Endothelial cell of umbilical vein (primary cell): ENCODE measurements at regions of chr11 and their contacts with region 1.

Region 1: DNA sequence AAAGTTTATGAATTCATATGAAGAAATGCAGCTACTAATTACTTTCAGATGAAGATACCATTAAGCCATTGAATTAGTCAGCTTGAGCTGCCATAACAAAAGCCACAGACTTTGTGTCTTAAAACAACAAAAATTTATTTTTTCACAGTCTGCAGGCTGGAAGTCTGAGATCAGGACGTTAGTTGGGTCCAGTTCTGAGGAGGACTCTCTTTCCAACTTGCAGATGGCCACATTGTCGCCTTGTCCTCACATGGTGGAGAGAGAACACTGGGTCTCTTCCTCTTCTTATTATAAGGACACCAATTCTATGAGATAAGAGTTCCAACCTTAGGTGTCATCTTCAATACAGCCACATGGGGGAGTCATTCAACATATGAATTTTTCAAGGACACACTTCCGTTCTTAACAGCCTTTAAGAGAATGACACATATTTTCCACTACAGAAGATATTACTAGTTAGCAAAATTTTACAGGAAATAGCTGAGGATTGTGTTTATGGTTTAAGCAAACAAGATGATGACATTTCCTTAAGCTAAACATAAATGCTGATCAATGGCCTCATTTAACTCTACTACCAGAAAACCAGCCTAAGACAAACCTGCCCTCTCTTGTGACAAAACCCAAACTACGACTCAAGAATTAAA is 56.0 kb downstream of the DCUN1D5 start:
- DNase-seq: peak; percentile 91
- H3K4me3 ChIP-seq: no peak overlapping the region
- H3K27ac ChIP-seq: peak overlapping the region; percentile 59
- H3K4me1 ChIP-seq: peaks cover 9% of the 10 kb centered on the region
- H3K27me3 ChIP-seq: no peaks in the 10 kb centered on the region
- CTCF ChIP-seq: peak; percentile 31 to 58
- POLR2A ChIP-seq: no peak

Region 2: DNA sequence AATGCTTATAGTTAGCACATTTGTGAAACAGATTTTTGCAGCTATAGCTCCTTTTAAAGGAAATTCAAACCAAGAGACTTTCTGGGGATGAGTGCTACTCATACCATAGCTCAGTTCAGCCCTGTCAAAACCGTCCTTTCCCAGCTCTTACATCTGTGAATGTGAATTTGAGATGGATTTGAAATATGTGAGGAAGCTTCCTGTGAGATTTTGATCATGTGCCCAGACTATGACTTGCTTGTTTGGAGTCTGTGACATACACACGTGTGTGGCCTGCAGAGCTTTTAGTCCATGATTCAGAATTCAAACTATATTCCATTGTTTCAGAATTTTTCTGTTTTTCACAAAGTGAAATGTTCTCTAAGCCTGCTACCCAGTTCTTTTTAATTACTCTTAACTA is 233.6 kb before region 1 on chr11:
- CTCF ChIA-PET with region 1: no interaction called
- POLR2A ChIA-PET with region 1: no interaction called
- dilution Hi-C with region 1: no loop called
- intact Hi-C with region 1: loop called (anchors 1 kb)
- DNase-seq: peak; percentile 30
- H3K4me3 ChIP-seq: no peak overlapping the region
- H3K27ac ChIP-seq: peak overlapping the region; percentile 39
- H3K4me1 ChIP-seq: peaks cover 29% of the 10 kb centered on the region
- H3K27me3 ChIP-seq: peaks cover 3 to 10% of the 10 kb centered on the region in 2 experiments
- CTCF ChIP-seq: no peak
- POLR2A ChIP-seq: no peak

Region 3: GRCh38 chr11:102831489-102832440 is 204.1 kb before region 1 on chr11:
- CTCF ChIA-PET with region 1: no interaction called
- POLR2A ChIA-PET with region 1: no interaction called
- dilution Hi-C with region 1: no loop called
- intact Hi-C with region 1: loop called (anchors 1 kb)
- DNase-seq: peak; percentile 63
- H3K4me3 ChIP-seq: peak overlapping the region in 2 of 3 experiments; percentile 15 to 40
- H3K27ac ChIP-seq: no peak overlapping the region
- H3K4me1 ChIP-seq: no peaks in the 10 kb centered on the region
- H3K27me3 ChIP-seq: peaks cover 5 to 13% of the 10 kb centered on the region in 2 experiments
- CTCF ChIP-seq: peak; percentile 62 to 71
- POLR2A ChIP-seq: no peak

Region 4: DNA sequence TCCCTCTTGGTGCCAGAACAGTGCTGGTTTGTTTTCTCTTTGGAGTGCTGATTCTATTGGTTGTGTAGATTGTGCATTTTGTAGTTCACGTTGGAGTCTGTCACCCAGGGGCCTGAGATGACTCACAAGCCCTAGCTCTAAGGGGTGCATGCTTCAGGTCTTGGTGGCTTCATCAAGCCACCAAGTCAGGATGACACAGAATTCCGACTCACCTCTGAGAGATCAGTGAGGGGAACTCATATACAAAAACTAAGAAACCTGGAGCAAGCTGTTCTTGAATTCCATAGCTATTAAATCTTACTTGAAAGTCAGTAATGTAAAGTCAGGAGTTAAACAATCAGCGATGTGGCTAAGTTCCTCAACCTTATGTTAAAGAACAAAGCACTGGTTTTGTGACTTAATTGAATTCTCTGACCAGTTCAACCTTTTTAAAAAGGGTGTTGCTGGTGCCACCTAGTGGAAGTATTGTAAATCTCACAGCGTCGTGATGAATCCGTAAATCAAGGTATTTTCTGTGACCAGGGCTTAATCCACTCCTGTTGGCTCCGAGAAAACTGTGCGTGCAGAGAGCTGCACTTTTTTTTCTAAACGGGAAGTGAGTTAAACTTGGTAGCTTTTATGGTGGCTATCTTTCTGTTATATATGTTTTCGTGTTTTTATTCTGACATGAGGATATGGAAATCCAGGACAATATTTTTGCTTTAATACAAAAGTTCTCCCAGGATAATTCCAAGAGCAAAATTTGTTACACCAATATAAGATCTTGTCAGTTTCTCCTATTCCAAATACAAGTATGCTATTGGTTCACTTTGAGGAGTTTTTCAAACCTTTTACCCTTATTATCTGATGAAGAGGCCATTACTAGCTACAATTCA is 95.0 kb before region 1 on chr11:
- CTCF ChIA-PET with region 1: interaction called, 9 read pairs
- POLR2A ChIA-PET with region 1: no interaction called
- dilution Hi-C with region 1: no loop called
- intact Hi-C with region 1: loop called (anchors 2 kb)
- DNase-seq: peak; percentile 79
- H3K4me3 ChIP-seq: no peak overlapping the region
- H3K27ac ChIP-seq: no peak overlapping the region
- H3K4me1 ChIP-seq: no peaks in the 10 kb centered on the region
- H3K27me3 ChIP-seq: no peaks in the 10 kb centered on the region
- CTCF ChIP-seq: peak; percentile 65 to 67
- POLR2A ChIP-seq: no peak

Region 5: DNA sequence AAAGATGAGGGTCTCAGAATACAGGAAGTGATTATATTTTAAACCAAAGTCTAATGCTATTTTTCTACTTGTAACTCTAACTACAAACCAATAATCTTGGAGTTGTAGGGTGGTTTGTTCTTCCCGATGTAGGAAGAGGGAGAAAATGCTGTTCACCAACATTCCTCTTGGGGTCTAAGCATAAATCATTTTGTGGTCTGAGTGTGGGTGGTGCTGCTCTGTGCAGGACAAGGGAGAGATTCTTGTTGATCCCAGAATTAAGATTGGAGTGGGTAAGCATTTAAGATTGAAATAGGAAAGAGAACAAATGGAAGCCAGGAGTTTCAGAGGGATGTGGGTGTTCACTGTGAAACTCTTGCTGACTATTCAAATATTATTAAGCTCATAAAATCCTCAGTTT is 41.8 kb before region 1 on chr11:
- CTCF ChIA-PET with region 1: interaction called, 6 read pairs
- POLR2A ChIA-PET with region 1: no interaction called
- dilution Hi-C with region 1: no loop called
- intact Hi-C with region 1: loop called (anchors 1 kb)
- DNase-seq: no peak
- H3K4me3 ChIP-seq: no peak overlapping the region
- H3K27ac ChIP-seq: no peak overlapping the region
- H3K4me1 ChIP-seq: peaks cover 37% of the 10 kb centered on the region
- H3K27me3 ChIP-seq: no peaks in the 10 kb centered on the region
- CTCF ChIP-seq: no peak
- POLR2A ChIP-seq: no peak

Region 6: DNA sequence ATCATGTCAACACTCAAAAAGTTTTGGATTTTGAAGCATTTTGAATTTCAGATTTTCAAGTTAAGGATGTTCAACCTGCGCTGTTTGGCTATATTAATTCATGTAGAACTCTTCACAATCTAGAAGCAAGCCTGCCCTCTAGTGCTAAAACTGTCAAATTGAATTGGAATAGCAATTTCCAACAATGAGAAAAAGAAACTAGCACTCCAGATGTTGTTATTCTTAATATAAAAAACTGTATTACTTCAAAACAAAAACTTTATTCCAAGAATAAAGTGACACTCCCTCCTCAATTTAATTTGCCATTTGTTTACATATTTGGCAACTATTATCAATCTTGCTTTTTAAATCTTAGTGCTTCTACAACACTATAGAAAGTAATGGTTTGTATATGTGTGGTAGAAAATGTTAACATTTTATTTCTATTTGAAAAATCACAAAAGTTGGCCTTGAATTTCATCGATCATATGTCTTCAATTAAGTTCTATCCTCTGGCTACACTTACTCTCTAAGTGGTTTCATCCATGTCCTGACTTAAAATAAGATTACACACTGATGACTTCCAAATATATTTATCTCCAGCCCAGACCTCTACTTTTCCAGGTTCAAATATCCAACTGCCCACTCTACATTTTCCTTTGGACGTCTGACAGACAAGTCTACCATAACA is 19.4 kb after region 1 on chr11:
- CTCF ChIA-PET with region 1: interaction called, 13 read pairs
- POLR2A ChIA-PET with region 1: no interaction called
- dilution Hi-C with region 1: no loop called
- intact Hi-C with region 1: loop called (anchors 1 kb)
- DNase-seq: peak; percentile 54
- H3K4me3 ChIP-seq: no peak overlapping the region
- H3K27ac ChIP-seq: no peak overlapping the region
- H3K4me1 ChIP-seq: no peaks in the 10 kb centered on the region
- H3K27me3 ChIP-seq: no peaks in the 10 kb centered on the region
- CTCF ChIP-seq: peak; percentile 43 to 45
- POLR2A ChIP-seq: no peak

Region 7: DNA sequence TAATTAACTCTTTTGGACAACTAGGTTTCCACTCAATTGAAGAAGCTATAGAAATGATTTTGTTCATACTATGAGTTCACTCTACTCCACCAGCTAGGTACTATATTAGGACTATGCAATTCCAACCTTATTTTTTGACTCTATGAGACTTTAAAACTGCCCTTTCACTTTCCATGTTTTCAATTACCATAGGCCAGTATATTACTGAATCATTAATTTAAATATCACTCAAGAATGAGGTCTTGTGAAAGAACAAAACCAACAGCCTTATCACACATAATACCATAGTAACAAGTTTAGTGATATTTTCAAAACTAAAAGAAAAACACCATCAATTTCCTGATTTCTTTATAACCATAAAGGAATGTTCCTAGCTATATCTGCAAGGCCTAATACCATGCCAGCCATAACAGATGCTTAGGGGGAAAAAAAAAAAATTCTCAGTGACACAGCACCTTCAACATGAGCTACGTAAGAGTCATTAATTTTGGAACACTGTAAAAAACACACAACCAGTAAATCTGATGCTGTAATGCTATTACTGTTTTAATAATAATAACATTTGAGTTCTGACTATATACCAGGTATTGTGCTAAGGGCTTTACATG is 49.9 kb after region 1 on chr11:
- CTCF ChIA-PET with region 1: no interaction called
- POLR2A ChIA-PET with region 1: no interaction called
- dilution Hi-C with region 1: no loop called
- intact Hi-C with region 1: no loop called
- DNase-seq: peak; percentile 71
- H3K4me3 ChIP-seq: no peak overlapping the region
- H3K27ac ChIP-seq: peak overlapping the region; percentile 20
- H3K4me1 ChIP-seq: peaks cover 23% of the 10 kb centered on the region
- H3K27me3 ChIP-seq: no peaks in the 10 kb centered on the region
- CTCF ChIP-seq: no peak
- POLR2A ChIP-seq: no peak